Calu3 (cell line): ENCODE measurements at regions of chr5 and their contacts with region 1.

Region 1: GRCh38 chr5:68272289-68272688 is 56.7 kb downstream of the PIK3R1 start:
- DNase-seq: no peak
- H3K4me3 Mint-ChIP-seq: no peak overlapping the region
- H3K27ac Mint-ChIP-seq: no peak overlapping the region
- H3K4me1 Mint-ChIP-seq: peaks cover 72% of the 10 kb centered on the region
- H3K27me3 Mint-ChIP-seq: no peaks in the 10 kb centered on the region
- CTCF ChIP-seq: no peak

Region 2: DNA sequence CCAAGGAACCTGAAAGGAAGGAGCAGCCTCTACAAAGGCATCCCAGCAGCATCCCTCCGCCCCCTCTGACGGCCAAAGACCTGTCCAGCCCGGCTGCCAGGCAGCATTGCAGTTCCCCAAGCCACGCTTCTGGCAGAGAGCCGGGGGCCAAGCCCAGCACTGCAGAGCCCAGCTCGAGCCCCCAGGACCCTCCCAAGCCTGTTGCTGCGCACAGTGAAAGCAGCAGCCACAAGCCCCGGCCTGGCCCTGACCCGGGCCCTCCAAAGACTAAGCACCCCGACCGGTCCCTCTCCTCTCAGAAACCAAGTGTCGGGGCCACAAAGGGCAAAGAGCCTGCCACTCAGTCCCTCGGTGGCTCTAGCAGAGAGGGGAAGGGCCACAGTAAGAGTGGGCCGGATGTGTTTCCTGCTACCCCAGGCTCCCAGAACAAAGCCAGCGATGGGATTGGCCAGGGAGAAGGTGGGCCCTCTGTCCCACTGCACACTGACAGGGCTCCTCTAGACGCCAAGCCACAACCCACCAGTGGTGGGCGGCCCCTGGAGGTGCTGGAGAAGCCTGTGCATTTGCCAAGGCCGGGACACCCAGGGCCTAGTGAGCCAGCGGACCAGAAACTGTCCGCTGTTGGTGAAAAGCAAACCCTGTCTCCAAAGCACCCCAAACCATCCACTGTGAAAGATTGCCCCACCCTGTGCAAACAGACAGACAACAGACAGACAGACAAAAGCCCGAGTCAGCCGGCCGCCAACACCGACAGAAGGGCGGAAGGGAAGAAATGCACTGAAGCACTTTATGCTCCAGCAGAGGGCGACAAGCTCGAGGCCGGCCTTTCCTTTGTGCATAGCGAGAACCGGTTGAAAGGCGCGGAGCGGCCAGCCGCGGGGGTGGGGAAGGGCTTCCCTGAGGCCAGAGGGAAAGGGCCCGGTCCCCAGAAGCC is 1106.5 kb before region 1 on chr5:
- CTCF ChIA-PET with region 1: no interaction called
- intact Hi-C with region 1: loop called (anchors 10 kb)
- DNase-seq: peak; percentile 89
- H3K4me3 Mint-ChIP-seq: peak overlapping the region; percentile 36
- H3K27ac Mint-ChIP-seq: peak overlapping the region; percentile 57
- H3K4me1 Mint-ChIP-seq: peaks cover 14% of the 10 kb centered on the region
- H3K27me3 Mint-ChIP-seq: no peaks in the 10 kb centered on the region
- CTCF ChIP-seq: peak; percentile 76

Region 3: GRCh38 chr5:67246108-67246507 is 1026.2 kb before region 1 on chr5:
- CTCF ChIA-PET with region 1: interaction called, 4 read pairs
- intact Hi-C with region 1: loop called (anchors 5 kb)
- DNase-seq: peak; percentile 47
- H3K4me3 Mint-ChIP-seq: no peak overlapping the region
- H3K27ac Mint-ChIP-seq: no peak overlapping the region
- H3K4me1 Mint-ChIP-seq: peaks cover 8% of the 10 kb centered on the region
- H3K27me3 Mint-ChIP-seq: no peaks in the 10 kb centered on the region
- CTCF ChIP-seq: peak; percentile 58

Region 4: GRCh38 chr5:67591491-67591890 is 680.8 kb before region 1 on chr5:
- CTCF ChIA-PET with region 1: no interaction called
- intact Hi-C with region 1: no loop called
- DNase-seq: no peak
- H3K4me3 Mint-ChIP-seq: no peak overlapping the region
- H3K27ac Mint-ChIP-seq: no peak overlapping the region
- H3K4me1 Mint-ChIP-seq: peaks cover 6% of the 10 kb centered on the region
- H3K27me3 Mint-ChIP-seq: no peaks in the 10 kb centered on the region
- CTCF ChIP-seq: no peak

Region 5: GRCh38 chr5:67648201-67648671 is 624.1 kb before region 1 on chr5:
- CTCF ChIA-PET with region 1: no interaction called
- intact Hi-C with region 1: loop called (anchors 10 kb)
- DNase-seq: peak; percentile 32
- H3K4me3 Mint-ChIP-seq: peak overlapping the region; percentile 45
- H3K27ac Mint-ChIP-seq: peak overlapping the region; percentile 60
- H3K4me1 Mint-ChIP-seq: peaks cover 32% of the 10 kb centered on the region
- H3K27me3 Mint-ChIP-seq: no peaks in the 10 kb centered on the region
- CTCF ChIP-seq: no peak

Region 6: GRCh38 chr5:68215208-68215897 is 56.9 kb before region 1 on chr5 and contains the start of gene PIK3R1:
- CTCF ChIA-PET with region 1: no interaction called
- intact Hi-C with region 1: loop called (anchors 5 kb)
- DNase-seq: peak; percentile 97
- H3K4me3 Mint-ChIP-seq: peak within 1 kb of the TSS; percentile 84
- H3K27ac Mint-ChIP-seq: peak within 1 kb of the TSS; percentile 77
- H3K4me1 Mint-ChIP-seq: peaks cover 25% of the 10 kb centered on the region
- H3K27me3 Mint-ChIP-seq: no peaks in the 10 kb centered on the region
- CTCF ChIP-seq: no peak
- total RNA-seq, gene PIK3R1: 74.8 and 81.5 TPM in 2 replicates